GM12878 (cell line): ENCODE measurements at regions of chr18 and their contacts with region 1.

Region 1: GRCh38 chr18:34224423-34225217 is at the start of gene NOL4:
- DNase-seq: no peak
- ATAC-seq: peak; percentile 45
- H3K4me3 ChIP-seq: no peak within 1 kb of the TSS
- H3K27ac ChIP-seq: no peak within 1 kb of the TSS
- H3K4me1 ChIP-seq: no peaks in the 10 kb centered on the region
- H3K27me3 ChIP-seq: peaks cover 0 to 13% of the 10 kb centered on the region in 2 experiments
- CTCF ChIP-seq: peak in 2 of 3 experiments; percentile 51 to 66; a peak in 4 of 6 replicates
- EP300 ChIP-seq: no peak
- POLR2A ChIP-seq: no peak
- RAD21 ChIP-seq: peak; percentile 6; the same call in 1 of the 2 replicates
- polyA plus RNA-seq, gene NOL4: 1.3 to 2.8 TPM

Region 2: DNA sequence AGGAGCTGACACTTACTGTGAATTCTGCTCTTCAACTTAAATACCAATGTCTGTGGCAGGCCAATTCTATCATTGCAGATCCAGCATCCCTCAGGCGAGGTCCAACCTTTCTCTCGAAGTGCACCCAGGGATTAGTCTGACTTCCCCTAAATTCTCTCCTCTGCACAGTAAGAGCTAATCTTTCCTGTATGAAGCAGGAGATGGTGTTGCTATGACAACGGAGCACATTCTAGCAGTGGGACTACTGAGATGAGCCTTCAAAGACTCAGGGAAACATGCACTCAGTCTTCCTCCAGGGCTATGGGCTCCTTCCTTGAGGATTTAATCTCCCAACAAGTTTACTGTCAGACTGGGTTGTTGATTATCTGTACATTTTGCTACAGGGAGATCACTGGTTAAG is 176.2 kb before region 1 on chr18:
- CTCF ChIA-PET with region 1: no interaction called
- POLR2A ChIA-PET with region 1: no interaction called
- RAD21 ChIA-PET with region 1: no interaction called
- SMC1A ChIA-PET with region 1: no interaction called
- in situ Hi-C with region 1: no loop called
- intact Hi-C with region 1: loop called (anchors 10 kb)
- DNase-seq: no peak
- ATAC-seq: peak; percentile 49
- H3K4me3 ChIP-seq: no peak overlapping the region
- H3K27ac ChIP-seq: no peak overlapping the region
- H3K4me1 ChIP-seq: no peaks in the 10 kb centered on the region
- H3K27me3 ChIP-seq: no peaks in the 10 kb centered on the region
- CTCF ChIP-seq: no peak
- EP300 ChIP-seq: no peak
- POLR2A ChIP-seq: no peak
- RAD21 ChIP-seq: no peak

Region 3: GRCh38 chr18:34158881-34159690 is 65.5 kb before region 1 on chr18:
- CTCF ChIA-PET with region 1: interaction called, 58 read pairs
- POLR2A ChIA-PET with region 1: interaction called, 4 read pairs
- RAD21 ChIA-PET with region 1: interaction called, 11 read pairs
- SMC1A ChIA-PET with region 1: interaction called, 5 read pairs
- in situ Hi-C with region 1: no loop called
- intact Hi-C with region 1: loop called (anchors 2 kb)
- DNase-seq: no peak
- ATAC-seq: peak; percentile 83
- H3K4me3 ChIP-seq: no peak overlapping the region
- H3K27ac ChIP-seq: no peak overlapping the region
- H3K4me1 ChIP-seq: no peaks in the 10 kb centered on the region
- H3K27me3 ChIP-seq: no peaks in the 10 kb centered on the region
- CTCF ChIP-seq: peak in 2 of 3 experiments; percentile 28 to 51; a peak in 1 of 6 replicates
- EP300 ChIP-seq: no peak
- POLR2A ChIP-seq: no peak
- RAD21 ChIP-seq: peak; percentile 33; the same call in 1 of the 2 replicates

Region 4: GRCh38 chr18:34297287-34297686 is 72.7 kb after region 1 on chr18:
- CTCF ChIA-PET with region 1: interaction called, 6 read pairs
- POLR2A ChIA-PET with region 1: interaction called, 4 read pairs
- RAD21 ChIA-PET with region 1: interaction called, 6 read pairs
- SMC1A ChIA-PET with region 1: interaction called, 13 read pairs
- in situ Hi-C with region 1: no loop called
- intact Hi-C with region 1: no loop called
- DNase-seq: no peak
- ATAC-seq: peak; percentile 18; the same call in 1 of the 3 replicates
- H3K4me3 ChIP-seq: no peak overlapping the region
- H3K27ac ChIP-seq: no peak overlapping the region
- H3K4me1 ChIP-seq: no peaks in the 10 kb centered on the region
- H3K27me3 ChIP-seq: no peaks in the 10 kb centered on the region
- CTCF ChIP-seq: no peak
- EP300 ChIP-seq: no peak
- POLR2A ChIP-seq: no peak
- RAD21 ChIP-seq: no peak

Region 5: GRCh38 chr18:34358923-34359322 is 134.3 kb after region 1 on chr18:
- CTCF ChIA-PET with region 1: interaction called, 11 read pairs
- POLR2A ChIA-PET with region 1: interaction called, 3 read pairs
- RAD21 ChIA-PET with region 1: interaction called, 20 read pairs
- SMC1A ChIA-PET with region 1: interaction called, 4 read pairs
- in situ Hi-C with region 1: no loop called
- intact Hi-C with region 1: loop called (anchors 5 kb)
- DNase-seq: peak; percentile 72
- ATAC-seq: peak; percentile 88
- H3K4me3 ChIP-seq: no peak overlapping the region
- H3K27ac ChIP-seq: no peak overlapping the region; the same call in 1 of the 2 replicates
- H3K4me1 ChIP-seq: no peaks in the 10 kb centered on the region; the same call in 1 of the 2 replicates
- H3K27me3 ChIP-seq: no peaks in the 10 kb centered on the region
- CTCF ChIP-seq: peak in 1 of 3 experiments; percentile 39; a peak in 2 of 6 replicates
- EP300 ChIP-seq: peak in 1 of 2 experiments; percentile 72; a peak in 2 of 4 replicates
- POLR2A ChIP-seq: no peak
- RAD21 ChIP-seq: peak; percentile 43; the same call in 1 of the 2 replicates